GM12878 (cell line): ENCODE measurements at regions of chr1 and their contacts with region 1.

Region 1: DNA sequence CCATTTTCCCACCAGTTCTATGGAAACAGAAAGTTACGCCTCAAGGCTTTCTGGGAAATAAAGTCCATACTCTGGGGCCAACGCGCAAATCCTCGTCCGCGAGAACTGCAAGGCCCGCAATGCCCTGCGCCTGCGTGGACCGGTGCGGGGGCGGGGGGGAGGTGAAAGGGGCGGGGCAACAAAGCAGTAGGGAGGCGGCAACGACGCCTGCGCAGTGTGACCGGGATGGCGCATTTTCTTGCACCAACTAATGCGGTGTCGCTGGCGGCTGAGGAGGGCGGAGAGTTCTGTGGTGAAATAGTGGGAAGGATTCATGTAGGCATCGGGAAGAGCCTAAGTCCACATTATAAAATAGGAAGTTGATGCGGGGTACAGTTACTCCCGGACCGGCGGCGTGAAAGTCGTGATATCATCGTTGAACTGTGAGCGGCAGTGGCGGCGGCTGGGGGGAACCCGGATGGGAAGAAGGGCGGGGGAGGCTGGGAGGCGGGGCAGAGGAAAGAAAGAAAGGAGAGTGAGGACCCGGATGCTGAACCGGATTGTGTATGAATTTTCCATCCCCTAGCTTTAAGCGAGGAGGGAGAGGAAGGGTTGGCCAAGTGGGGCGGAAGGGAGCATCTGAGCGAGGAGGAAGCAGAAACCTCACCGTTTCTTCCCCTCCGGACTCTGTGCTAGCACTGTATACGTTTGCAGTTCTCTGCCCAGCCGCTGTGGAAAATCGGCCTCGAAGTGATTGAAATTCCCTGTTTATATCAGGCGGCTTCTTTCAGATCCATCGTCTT is at the start of gene GGPS1:
- DNase-seq: peak; percentile 99
- ATAC-seq: peak; percentile 87
- H3K4me3 ChIP-seq: peak within 1 kb of the TSS; percentile 92
- H3K27ac ChIP-seq: peak within 1 kb of the TSS; percentile 93
- H3K4me1 ChIP-seq: peaks cover 8% of the 10 kb centered on the region; the same call in 1 of the 2 replicates
- H3K27me3 ChIP-seq: no peaks in the 10 kb centered on the region
- CTCF ChIP-seq: no peak
- EP300 ChIP-seq: no peak
- POLR2A ChIP-seq: peak; percentile 87
- RAD21 ChIP-seq: no peak
- polyA plus RNA-seq, gene GGPS1: 28.9 to 36.0 TPM

Region 2: GRCh38 chr1:233843525-233844204 is 1484.9 kb before region 1 on chr1:
- CTCF ChIA-PET with region 1: no interaction called
- POLR2A ChIA-PET with region 1: no interaction called
- RAD21 ChIA-PET with region 1: no interaction called
- SMC1A ChIA-PET with region 1: no interaction called
- in situ Hi-C with region 1: no loop called
- intact Hi-C with region 1: no loop called
- DNase-seq: no peak
- ATAC-seq: no peak
- H3K4me3 ChIP-seq: no peak overlapping the region
- H3K27ac ChIP-seq: no peak overlapping the region
- H3K4me1 ChIP-seq: no peaks in the 10 kb centered on the region
- H3K27me3 ChIP-seq: no peaks in the 10 kb centered on the region
- CTCF ChIP-seq: no peak
- EP300 ChIP-seq: no peak
- POLR2A ChIP-seq: no peak
- RAD21 ChIP-seq: no peak

Region 3: GRCh38 chr1:235128456-235129328 is 199.9 kb before region 1 on chr1 and contains the start of gene TOMM20:
- CTCF ChIA-PET with region 1: no interaction called
- POLR2A ChIA-PET with region 1: no interaction called
- RAD21 ChIA-PET with region 1: no interaction called
- SMC1A ChIA-PET with region 1: no interaction called
- in situ Hi-C with region 1: no loop called
- intact Hi-C with region 1: loop called (anchors 5 kb)
- DNase-seq: peak; percentile 95
- ATAC-seq: peak; percentile 92
- H3K4me3 ChIP-seq: peak within 1 kb of the TSS; percentile 90
- H3K27ac ChIP-seq: peak within 1 kb of the TSS; percentile 90
- H3K4me1 ChIP-seq: 0 out of 2 replicates have a peak, but pooled peaks cover 3% of the 10 kb centered on the region
- H3K27me3 ChIP-seq: no peaks in the 10 kb centered on the region
- CTCF ChIP-seq: no peak
- EP300 ChIP-seq: no peak
- POLR2A ChIP-seq: peak; percentile 99
- RAD21 ChIP-seq: no peak
- polyA plus RNA-seq, gene TOMM20: 39.8 to 60.1 TPM

Region 4: DNA sequence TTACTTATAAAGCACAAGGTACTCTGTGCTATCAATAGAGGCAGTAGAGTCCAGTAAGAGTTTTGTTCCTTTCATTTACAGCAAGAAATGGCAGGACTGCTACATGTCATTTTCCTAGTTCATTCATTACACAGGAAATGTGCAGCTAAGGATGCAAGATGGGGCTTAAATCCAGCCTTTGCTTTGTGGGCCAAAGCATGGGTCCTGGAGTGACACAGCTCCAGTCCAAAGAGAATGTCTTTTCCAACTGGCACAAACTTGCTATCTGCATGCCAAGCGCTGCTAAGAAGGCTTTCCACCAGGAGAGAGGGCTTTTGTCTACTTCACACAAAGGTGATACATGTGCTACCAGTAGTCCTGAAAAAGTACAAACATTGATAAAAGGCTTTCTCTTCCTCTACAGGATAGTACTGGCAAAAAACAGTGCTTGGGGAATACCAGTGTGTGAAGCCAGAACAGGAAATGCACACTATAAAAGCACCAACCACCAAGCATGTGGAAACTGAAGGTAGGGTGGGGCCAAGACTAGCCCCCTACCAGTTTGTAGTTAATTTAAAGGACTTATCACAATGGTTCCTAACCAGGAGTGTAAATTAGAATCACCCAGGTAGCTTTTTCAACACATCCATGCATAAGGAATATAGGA is 69.3 kb before region 1 on chr1:
- CTCF ChIA-PET with region 1: interaction called, 6 read pairs
- POLR2A ChIA-PET with region 1: interaction called, 17 read pairs
- RAD21 ChIA-PET with region 1: interaction called, 15 read pairs
- SMC1A ChIA-PET with region 1: interaction called, 38 read pairs
- in situ Hi-C with region 1: no loop called
- intact Hi-C with region 1: no loop called
- DNase-seq: peak; percentile 38
- ATAC-seq: peak; percentile 90
- H3K4me3 ChIP-seq: no peak overlapping the region
- H3K27ac ChIP-seq: peak overlapping the region; percentile 74
- H3K4me1 ChIP-seq: peaks cover 14% of the 10 kb centered on the region
- H3K27me3 ChIP-seq: no peaks in the 10 kb centered on the region
- CTCF ChIP-seq: no peak
- EP300 ChIP-seq: no peak
- POLR2A ChIP-seq: no peak
- RAD21 ChIP-seq: peak; percentile 28; the same call in 1 of the 2 replicates

Region 5: DNA sequence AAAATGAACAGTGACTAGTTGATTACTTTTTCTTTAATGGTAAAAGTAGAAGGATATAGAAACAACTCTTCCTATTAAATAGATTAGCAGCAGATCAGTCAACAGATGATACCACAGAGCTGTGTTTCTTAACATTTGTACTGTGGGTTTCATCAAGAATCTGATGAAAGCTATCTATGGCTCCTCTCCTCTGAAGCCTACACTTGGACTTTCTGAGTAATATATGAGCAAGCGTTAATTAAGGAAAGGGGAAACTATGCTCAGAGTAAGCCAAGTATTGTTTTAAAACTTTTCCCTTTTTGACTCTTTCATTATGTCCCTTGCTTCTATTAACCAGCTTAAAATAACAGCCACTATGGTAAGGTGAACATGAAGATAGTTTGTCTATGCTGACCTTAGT is 11.4 kb before region 1 on chr1:
- CTCF ChIA-PET with region 1: interaction called, 16 read pairs
- POLR2A ChIA-PET with region 1: interaction called, 16 read pairs
- RAD21 ChIA-PET with region 1: interaction called, 3 read pairs
- SMC1A ChIA-PET with region 1: interaction called, 17 read pairs
- in situ Hi-C with region 1: no loop called
- intact Hi-C with region 1: no loop called
- DNase-seq: no peak
- ATAC-seq: peak; percentile 70
- H3K4me3 ChIP-seq: no peak overlapping the region
- H3K27ac ChIP-seq: no peak overlapping the region
- H3K4me1 ChIP-seq: peaks cover 6% of the 10 kb centered on the region; the same call in 1 of the 2 replicates
- H3K27me3 ChIP-seq: no peaks in the 10 kb centered on the region
- CTCF ChIP-seq: no peak
- EP300 ChIP-seq: no peak
- POLR2A ChIP-seq: no peak
- RAD21 ChIP-seq: no peak

Region 6: DNA sequence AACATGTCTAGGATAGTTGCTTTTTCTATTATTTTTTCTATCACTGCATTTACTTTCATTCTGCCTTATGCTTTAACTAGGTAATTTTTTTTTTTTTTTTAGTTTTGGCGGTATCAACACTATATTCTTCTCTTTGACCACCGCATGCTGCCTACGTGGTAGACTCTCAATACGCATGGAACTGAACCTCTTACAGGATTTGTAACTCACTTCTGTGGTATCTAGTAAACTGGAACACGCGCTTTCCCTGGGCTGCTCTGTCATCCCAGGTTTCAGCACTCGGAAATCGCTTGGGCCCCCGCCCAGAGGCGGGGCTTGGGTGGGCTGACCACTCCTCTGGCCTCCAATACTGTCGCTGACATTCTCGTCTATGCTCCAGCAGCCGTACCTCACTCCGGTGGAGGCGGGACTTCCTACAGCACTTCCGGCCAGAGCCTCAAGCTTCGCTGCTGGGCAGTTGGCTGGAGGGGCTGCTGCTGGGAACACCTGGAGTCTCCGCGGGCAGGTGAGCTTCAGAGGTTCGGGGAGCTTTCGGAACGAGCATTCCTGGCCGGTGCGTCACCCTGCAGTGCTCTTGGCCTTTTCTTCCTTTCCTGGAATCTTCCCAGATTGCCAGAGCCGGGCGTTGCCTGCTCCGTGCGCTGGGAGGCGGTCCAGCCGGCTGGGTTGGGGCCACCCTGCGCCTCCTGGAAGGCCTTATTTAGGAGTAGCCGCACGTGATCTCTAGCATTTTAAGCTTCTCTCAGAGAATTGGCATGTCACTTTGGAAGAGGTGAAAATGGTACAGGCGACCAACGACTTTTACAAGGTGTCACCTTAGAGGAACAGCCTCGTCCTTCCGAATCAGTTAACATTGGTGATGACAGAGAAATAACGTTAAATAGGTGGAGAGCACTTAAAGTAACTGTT is 38.7 kb after region 1 on chr1 and contains the start of gene TBCE:
- CTCF ChIA-PET with region 1: interaction called, 3 read pairs
- POLR2A ChIA-PET with region 1: interaction called, 4 read pairs
- RAD21 ChIA-PET with region 1: interaction called, 3 read pairs
- SMC1A ChIA-PET with region 1: no interaction called
- in situ Hi-C with region 1: no loop called
- intact Hi-C with region 1: loop called (anchors 1 kb)
- DNase-seq: peak; percentile 84
- ATAC-seq: peak; percentile 100
- H3K4me3 ChIP-seq: peak within 1 kb of the TSS; percentile 74
- H3K27ac ChIP-seq: peak within 1 kb of the TSS; percentile 64
- H3K4me1 ChIP-seq: no peaks in the 10 kb centered on the region
- H3K27me3 ChIP-seq: no peaks in the 10 kb centered on the region
- CTCF ChIP-seq: no peak
- EP300 ChIP-seq: no peak
- POLR2A ChIP-seq: peak; percentile 93
- RAD21 ChIP-seq: no peak
- polyA plus RNA-seq, gene TBCE: 22.7 to 27.8 TPM

Region 7: GRCh38 chr1:235404195-235404594 is 75.6 kb after region 1 on chr1:
- CTCF ChIA-PET with region 1: no interaction called
- POLR2A ChIA-PET with region 1: no interaction called
- RAD21 ChIA-PET with region 1: no interaction called
- SMC1A ChIA-PET with region 1: no interaction called
- in situ Hi-C with region 1: no loop called
- intact Hi-C with region 1: no loop called
- DNase-seq: no peak
- ATAC-seq: no peak
- H3K4me3 ChIP-seq: no peak overlapping the region
- H3K27ac ChIP-seq: no peak overlapping the region
- H3K4me1 ChIP-seq: no peaks in the 10 kb centered on the region
- H3K27me3 ChIP-seq: no peaks in the 10 kb centered on the region
- CTCF ChIP-seq: no peak
- EP300 ChIP-seq: no peak
- POLR2A ChIP-seq: no peak
- RAD21 ChIP-seq: no peak

Region 8: DNA sequence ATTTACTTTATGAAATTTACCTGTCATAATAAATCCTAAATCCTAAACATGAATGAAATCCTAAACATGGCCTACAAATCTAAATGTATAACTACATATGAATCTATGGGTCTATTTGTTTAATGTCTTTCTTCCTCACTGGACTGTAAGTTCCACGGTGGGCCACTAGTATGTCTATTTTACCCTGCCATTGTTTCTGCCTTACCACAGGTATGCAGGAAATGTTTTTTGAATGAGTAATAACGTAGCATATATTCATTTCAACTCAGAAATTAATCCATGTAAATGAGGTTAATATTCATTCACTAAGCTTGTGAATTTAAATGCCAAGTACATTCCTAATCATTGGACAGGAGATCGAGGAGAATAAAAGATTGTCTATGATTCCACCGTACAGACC is 140.4 kb after region 1 on chr1:
- CTCF ChIA-PET with region 1: no interaction called
- POLR2A ChIA-PET with region 1: no interaction called
- RAD21 ChIA-PET with region 1: no interaction called
- SMC1A ChIA-PET with region 1: no interaction called
- in situ Hi-C with region 1: no loop called
- intact Hi-C with region 1: no loop called
- DNase-seq: no peak
- ATAC-seq: no peak
- H3K4me3 ChIP-seq: no peak overlapping the region
- H3K27ac ChIP-seq: no peak overlapping the region
- H3K4me1 ChIP-seq: no peaks in the 10 kb centered on the region
- H3K27me3 ChIP-seq: no peaks in the 10 kb centered on the region
- CTCF ChIP-seq: no peak
- EP300 ChIP-seq: no peak
- POLR2A ChIP-seq: no peak
- RAD21 ChIP-seq: no peak